Tibial artery (tissue), 4 donors: ENCODE measurements at regions of chr6 and their contacts with region 1.

Region 1: GRCh38 chr6:42075159-42075838 is 25.0 kb downstream of the TAF8 start:
- DNase-seq: peak; percentile 79 to 80
- H3K4me3 ChIP-seq: no peak overlapping the region
- H3K27ac ChIP-seq: no peak overlapping the region
- H3K4me1 ChIP-seq: peaks cover 0 to 12% (median 0%) of the 10 kb centered on the region in 4 donors
- H3K27me3 ChIP-seq: no peaks in the 10 kb centered on the region
- CTCF ChIP-seq: peak; percentile 75 to 80

Region 2: GRCh38 chr6:42166444-42167141 is 91.3 kb after region 1 on chr6:
- intact Hi-C with region 1: loop called (anchors 5 kb)
- DNase-seq: peak; percentile 63 to 72
- H3K4me3 ChIP-seq: no peak overlapping the region
- H3K27ac ChIP-seq: no peak overlapping the region
- H3K4me1 ChIP-seq: no peaks in the 10 kb centered on the region
- H3K27me3 ChIP-seq: peaks cover 0 to 20% of the 10 kb centered on the region in 2 donors
- CTCF ChIP-seq: peak; percentile 84 to 90

Region 3: DNA sequence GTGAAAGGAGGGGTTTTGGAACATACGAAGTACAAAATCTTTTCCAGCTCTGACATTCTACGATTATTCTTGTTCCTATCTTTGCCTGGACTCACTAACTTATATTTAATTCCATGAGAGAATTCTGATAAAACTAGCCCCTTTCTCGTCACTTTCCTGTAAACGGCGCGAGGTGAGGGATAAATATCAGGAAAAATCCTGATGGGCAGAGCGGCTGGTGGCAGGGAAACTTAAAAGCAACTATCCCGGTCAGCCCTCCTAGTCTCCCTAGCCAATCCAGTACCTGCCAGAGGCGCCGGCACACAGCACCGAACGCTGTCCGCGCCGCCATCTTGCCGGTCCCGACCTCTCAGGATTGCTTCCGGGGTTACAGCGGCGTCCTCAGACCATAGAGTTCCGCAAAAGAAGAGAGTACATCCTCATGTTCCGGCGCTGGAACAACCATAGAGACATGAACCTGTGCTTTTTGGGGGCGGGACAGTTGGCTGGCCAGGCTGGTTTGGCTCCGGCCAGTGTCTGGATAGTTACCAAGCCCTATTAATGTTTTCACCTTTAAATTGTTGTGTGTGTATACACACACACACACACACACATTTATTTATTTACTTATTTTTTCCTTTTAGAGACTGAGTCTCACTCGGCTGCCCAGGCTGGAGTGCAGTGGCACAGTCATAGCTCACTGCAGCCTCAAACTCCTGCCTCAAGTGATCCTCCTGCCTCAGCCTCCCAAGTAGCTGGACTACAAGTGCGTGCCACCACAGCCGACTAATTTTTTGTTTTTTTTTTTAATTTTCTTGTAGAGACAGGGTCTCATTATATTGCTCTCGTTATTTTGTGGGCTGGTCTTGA is 142.4 kb after region 1 on chr6 and contains the start of gene MRPS10:
- intact Hi-C with region 1: loop called (anchors 10 kb)
- DNase-seq: peak; percentile 92 to 95
- H3K4me3 ChIP-seq: peak within 1 kb of the TSS; percentile 71 to 74
- H3K27ac ChIP-seq: peak within 1 kb of the TSS; percentile 71 to 82
- H3K4me1 ChIP-seq: peaks cover 0 to 21% (median 7%) of the 10 kb centered on the region in 4 donors
- H3K27me3 ChIP-seq: no peaks in the 10 kb centered on the region
- CTCF ChIP-seq: no peak